HCT116 (cell line): ENCODE measurements at regions of chr19 and their contacts with region 1.

Region 1: DNA sequence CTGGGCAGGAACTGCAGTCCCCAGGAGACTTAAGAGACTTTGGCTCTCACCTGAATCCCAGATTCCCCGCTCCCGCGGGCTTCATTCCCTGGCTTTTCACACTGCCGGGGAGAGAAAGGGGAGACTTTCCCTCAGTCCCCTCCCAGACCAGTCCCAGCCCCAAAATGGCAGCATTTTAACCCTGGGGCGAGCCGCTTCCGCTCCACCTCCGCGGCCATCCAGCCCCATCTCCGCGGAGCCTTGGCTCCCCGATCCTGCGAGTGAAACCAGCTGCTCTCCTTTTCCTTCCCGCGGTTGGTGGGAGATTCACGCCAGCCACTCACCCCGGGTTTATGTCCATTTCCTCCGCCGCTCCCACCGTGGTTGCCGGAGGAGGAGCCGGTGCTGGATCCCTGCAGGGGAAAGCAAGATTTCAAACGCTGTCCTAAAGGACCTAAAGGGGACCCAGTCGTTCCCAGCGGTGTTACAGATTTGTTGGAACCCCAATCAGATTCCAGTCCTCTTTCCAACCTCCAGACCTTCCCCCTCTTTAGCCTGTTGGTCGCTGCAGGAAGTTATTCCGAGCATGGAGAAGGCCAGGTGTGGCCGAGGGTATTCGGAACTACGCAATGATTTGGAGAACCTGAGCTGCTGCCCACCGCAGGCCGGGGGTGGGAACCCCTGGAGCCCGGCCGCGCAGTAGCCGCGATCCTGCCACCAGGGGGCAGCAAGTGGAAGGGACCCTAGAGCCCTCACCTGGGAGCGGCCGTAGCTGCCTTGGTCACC is 3.4 kb downstream of the DMKN start:
- DNase-seq: peak; percentile 82
- ATAC-seq: peak; percentile 81
- H3K4me3 ChIP-seq: peak overlapping the region; percentile 66 to 70
- H3K27ac ChIP-seq: peak overlapping the region; percentile 94
- H3K4me1 ChIP-seq: peaks cover 19 to 37% of the 10 kb centered on the region in 2 experiments
- H3K27me3 ChIP-seq: no peaks in the 10 kb centered on the region
- CTCF ChIP-seq: peak; percentile 95 to 96 (median 95)
- POLR2A ChIP-seq: peak; percentile 90
- RAD21 ChIP-seq: peak; percentile 73

Region 2: DNA sequence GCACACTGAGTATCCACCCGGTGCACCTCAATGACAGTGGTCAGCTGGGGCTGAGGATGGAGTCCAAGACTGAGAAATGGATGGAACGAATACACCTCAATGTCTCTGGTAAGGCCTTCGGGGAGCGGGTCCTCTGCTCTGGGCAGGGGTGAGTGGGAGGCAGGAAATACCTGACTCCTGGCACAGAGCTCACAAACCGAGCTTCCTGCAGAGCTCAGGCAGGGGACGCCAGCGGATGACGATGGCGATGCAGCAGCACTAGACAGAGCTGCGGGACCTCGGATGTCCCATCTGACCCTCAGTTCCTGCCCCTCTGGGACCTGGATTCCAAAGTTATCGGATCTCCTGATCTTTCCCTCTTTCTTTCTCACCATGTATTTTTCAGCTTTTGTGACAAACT is 177.2 kb before region 1 on chr19:
- CTCF ChIA-PET with region 1: no interaction called
- POLR2A ChIA-PET with region 1: no interaction called
- RAD21 ChIA-PET with region 1: no interaction called
- intact Hi-C with region 1: no loop called
- DNase-seq: no peak
- ATAC-seq: no peak
- H3K4me3 ChIP-seq: no peak overlapping the region
- H3K27ac ChIP-seq: no peak overlapping the region
- H3K4me1 ChIP-seq: no peaks in the 10 kb centered on the region
- H3K27me3 ChIP-seq: no peaks in the 10 kb centered on the region
- CTCF ChIP-seq: no peak
- POLR2A ChIP-seq: no peak
- RAD21 ChIP-seq: no peak

Region 3: GRCh38 chr19:35495107-35496064 is 14.7 kb before region 1 on chr19:
- CTCF ChIA-PET with region 1: interaction called, 11 read pairs
- POLR2A ChIA-PET with region 1: interaction called, 8 read pairs
- RAD21 ChIA-PET with region 1: interaction called in 1 of 2 experiments, 4 read pairs
- intact Hi-C with region 1: no loop called
- DNase-seq: peak; percentile 35
- ATAC-seq: peak; percentile 94
- H3K4me3 ChIP-seq: peak overlapping the region; percentile 20 to 27; a peak in 3 of 4 replicates
- H3K27ac ChIP-seq: 0 out of 2 replicates have a peak overlapping the region, but pooled peaks have one; percentile 6
- H3K4me1 ChIP-seq: peaks cover 4 to 11% of the 10 kb centered on the region in 2 experiments; a peak in 3 of 4 replicates
- H3K27me3 ChIP-seq: no peaks in the 10 kb centered on the region; the same call in 1 of the 2 replicates
- CTCF ChIP-seq: peak; percentile 81 to 98 (median 90); a peak in 5 of 6 replicates
- POLR2A ChIP-seq: no peak
- RAD21 ChIP-seq: peak; percentile 78

Region 4: DNA sequence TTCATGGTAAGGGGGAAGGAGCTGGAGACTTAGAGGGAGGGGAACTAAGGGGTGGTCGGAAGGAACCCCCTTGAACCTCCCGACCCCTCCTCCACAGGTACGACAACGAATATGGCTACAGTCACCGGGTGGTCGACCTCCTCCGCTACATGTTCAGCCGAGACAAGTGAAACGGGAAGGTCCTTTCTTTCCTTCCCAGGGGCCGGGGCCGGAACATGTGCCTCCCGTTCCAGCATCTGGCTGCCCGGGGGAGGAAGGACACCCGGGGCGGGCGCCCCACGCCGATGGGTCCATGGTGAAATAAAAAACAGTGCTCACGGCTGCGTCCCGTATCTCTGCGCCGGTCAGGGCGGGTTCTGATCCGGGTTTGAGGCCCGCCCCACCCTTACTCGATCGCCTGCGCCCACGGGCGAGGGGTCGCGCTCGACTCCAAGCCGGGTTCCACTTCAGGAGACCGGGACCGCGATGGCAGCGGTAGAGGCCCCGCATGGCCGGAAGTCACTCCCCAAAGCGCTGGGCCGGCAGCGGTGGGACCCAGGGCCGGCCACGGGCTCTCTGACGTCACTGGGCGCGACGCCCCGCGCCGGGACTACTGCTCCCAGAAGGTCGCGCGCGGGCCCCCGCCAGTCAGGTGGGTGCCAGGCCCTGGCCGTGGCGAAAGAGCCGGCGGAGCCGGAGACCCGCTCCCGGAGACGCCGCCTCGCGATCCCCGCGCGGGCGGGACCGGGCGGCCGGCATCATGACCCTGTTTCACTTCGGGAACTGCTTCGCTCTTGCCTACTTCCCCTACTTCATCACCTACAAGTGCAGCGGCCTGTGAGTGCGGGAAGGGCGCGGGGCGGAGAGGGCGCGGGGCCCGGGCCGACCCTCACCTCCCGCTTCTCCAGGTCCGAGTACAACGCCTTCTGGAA is 35.2 kb after region 1 on chr19 and contains the start of gene TMEM147:
- CTCF ChIA-PET with region 1: interaction called, 6 read pairs
- POLR2A ChIA-PET with region 1: interaction called, 3 read pairs
- RAD21 ChIA-PET with region 1: no interaction called
- intact Hi-C with region 1: loop called (anchors 1 kb)
- DNase-seq: peak; percentile 70
- ATAC-seq: peak; percentile 93
- H3K4me3 ChIP-seq: peak within 1 kb of the TSS; percentile 69 to 100
- H3K27ac ChIP-seq: peak within 1 kb of the TSS; percentile 89
- H3K4me1 ChIP-seq: peaks cover 9 to 22% of the 10 kb centered on the region in 2 experiments
- H3K27me3 ChIP-seq: no peaks in the 10 kb centered on the region
- CTCF ChIP-seq: no peak
- POLR2A ChIP-seq: peak; percentile 77
- RAD21 ChIP-seq: no peak
- total RNA-seq, gene TMEM147: 128 TPM

Region 5: DNA sequence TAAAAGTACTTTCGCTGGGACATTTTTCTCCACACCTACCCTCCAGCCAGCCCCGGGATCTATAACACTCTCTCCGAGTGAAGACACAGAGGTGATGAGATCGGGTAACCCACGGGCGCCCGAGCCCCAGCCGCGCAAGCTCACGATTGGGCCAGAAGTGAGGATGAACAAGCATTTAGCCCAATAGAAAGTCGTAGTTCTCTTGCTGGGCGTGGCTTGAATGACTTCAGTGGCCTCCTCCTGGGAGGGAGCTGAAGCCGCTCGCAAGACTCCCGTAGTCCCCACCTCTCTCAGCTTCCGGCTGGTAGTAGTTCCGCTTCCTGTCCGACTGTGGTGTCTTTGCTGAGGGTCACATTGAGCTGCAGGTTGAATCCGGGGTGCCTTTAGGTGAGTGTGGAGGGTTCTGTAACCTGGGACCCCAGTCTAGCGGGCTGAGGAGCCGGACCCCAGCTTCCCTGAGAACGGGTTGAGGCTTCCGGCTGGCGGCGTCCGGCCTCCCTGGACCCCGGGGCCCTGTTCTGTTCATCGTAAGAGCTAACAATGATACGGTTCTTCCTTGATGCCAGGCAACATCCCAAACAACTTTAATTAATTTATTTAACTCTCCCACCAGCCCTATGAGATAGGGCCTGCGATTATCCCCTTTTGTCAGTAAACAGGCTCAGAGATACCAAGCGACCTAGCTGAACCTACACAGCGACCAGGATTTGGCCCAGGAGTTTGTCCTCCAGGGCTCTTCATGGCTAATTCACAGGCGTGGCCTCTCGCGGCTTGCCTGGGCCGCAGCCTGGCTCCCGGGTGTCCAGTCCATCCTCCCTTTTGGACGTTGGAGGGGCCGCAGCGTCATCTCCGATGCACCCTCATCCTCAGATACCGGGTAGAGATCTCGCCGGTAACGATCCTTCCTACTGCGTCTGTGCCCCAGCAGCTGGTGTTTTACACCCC is 138.2 kb after region 1 on chr19 and contains the start of gene COX6B1:
- CTCF ChIA-PET with region 1: interaction called, 6 read pairs
- POLR2A ChIA-PET with region 1: interaction called, 6 read pairs
- RAD21 ChIA-PET with region 1: no interaction called
- intact Hi-C with region 1: loop called (anchors 1 kb)
- DNase-seq: peak; percentile 94
- ATAC-seq: peak; percentile 63
- H3K4me3 ChIP-seq: peak within 1 kb of the TSS; percentile 87 to 95
- H3K27ac ChIP-seq: peak within 1 kb of the TSS; percentile 85
- H3K4me1 ChIP-seq: peaks cover 14 to 41% of the 10 kb centered on the region in 2 experiments; a peak in 3 of 4 replicates
- H3K27me3 ChIP-seq: no peaks in the 10 kb centered on the region
- CTCF ChIP-seq: no peak
- POLR2A ChIP-seq: peak; percentile 88
- RAD21 ChIP-seq: no peak
- total RNA-seq, gene COX6B1: 496 TPM